Heart left ventricle (tissue), 16 donors: ENCODE measurements at regions of chr1 and their contacts with region 1.

Region 1: GRCh38 chr1:50704126-50704525 is 255.9 kb downstream of the FAF1 start:
- DNase-seq: no peak
- ATAC-seq: no peak
- H3K4me3 ChIP-seq: no peak overlapping the region
- H3K27ac ChIP-seq: no peak overlapping the region
- H3K4me1 ChIP-seq: peaks cover 0 to 16% (median 4%) of the 10 kb centered on the region in 12 donors
- H3K27me3 ChIP-seq: no peaks in the 10 kb centered on the region
- CTCF ChIP-seq: peak; percentile 49 to 78 (median 69)
- POLR2A ChIP-seq: no peak

Region 2: DNA sequence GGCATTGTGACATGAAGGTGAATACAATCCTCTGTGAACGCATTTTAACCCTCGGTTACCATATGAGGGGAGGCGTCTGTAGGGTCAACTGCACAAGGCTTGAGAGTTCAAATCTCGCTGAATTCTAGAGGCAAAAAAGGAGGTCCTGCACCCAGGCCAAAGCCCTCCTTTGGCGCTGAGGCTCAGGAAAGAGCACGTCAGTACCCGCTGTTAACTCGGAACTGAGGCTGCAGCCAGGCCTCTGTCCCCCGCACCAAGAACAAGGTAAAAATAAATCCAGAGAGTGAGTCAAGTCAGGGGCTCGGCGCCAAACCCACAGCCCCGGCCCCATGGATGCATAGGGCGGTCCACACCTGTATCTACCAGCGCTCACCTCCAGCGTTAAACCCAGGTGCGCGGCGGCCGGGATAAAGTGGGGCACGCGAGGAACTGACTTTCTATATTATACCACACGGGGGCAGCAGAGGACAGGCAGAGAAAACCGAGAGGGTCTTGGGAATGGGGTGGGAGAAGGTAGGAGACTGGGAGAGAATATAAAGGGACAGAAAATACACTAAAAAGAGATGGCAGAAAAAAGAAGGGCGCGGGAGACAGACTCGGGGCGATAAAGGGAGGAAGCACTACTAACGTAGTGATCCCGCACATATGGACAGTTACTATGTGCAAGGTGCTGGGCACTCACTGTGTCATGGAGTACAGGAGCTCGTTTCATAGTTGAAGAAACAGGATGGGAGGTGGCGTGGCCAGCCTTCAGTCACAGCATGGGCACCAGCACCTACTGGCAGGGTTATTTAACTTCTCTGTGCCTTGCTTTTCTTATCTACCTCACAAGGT is 335.7 kb before region 1 on chr1:
- intact Hi-C with region 1: loop called in 9 of 10 experiments (anchors 2 to 10 kb)
- DNase-seq: no peak
- ATAC-seq: peak in 3 of 4 donors; percentile 42 to 53 (median 52)
- H3K4me3 ChIP-seq: no peak overlapping the region
- H3K27ac ChIP-seq: no peak overlapping the region
- H3K4me1 ChIP-seq: peaks cover 0 to 5% (median 0%) of the 10 kb centered on the region in 12 donors
- H3K27me3 ChIP-seq: peaks cover 4 to 39% (median 10%) of the 10 kb centered on the region in 9 donors
- CTCF ChIP-seq: peak; percentile 54 to 82 (median 70)
- POLR2A ChIP-seq: no peak

Region 3: GRCh38 chr1:50829014-50829958 is 125.2 kb after region 1 on chr1:
- intact Hi-C with region 1: no loop called
- DNase-seq: no peak
- ATAC-seq: peak; percentile 76 to 88 (median 80)
- H3K4me3 ChIP-seq: no peak overlapping the region
- H3K27ac ChIP-seq: peak overlapping the region in 6 of 12 donors; percentile 5 to 39 (median 22)
- H3K4me1 ChIP-seq: peaks cover 0 to 41% (median 15%) of the 10 kb centered on the region in 12 donors
- H3K27me3 ChIP-seq: no peaks in the 10 kb centered on the region
- CTCF ChIP-seq: no peak
- POLR2A ChIP-seq: no peak

Region 4: GRCh38 chr1:51264451-51264850 is 560.3 kb after region 1 on chr1:
- intact Hi-C with region 1: no loop called
- DNase-seq: peak in 2 of 5 donors; percentile 21 to 47
- ATAC-seq: peak; percentile 66 to 82 (median 74)
- H3K4me3 ChIP-seq: peak overlapping the region in 1 of 12 donors; percentile 13
- H3K27ac ChIP-seq: peak overlapping the region in 9 of 12 donors; percentile 17 to 75 (median 48)
- H3K4me1 ChIP-seq: peaks cover 14 to 97% (median 75%) of the 10 kb centered on the region in 12 donors
- H3K27me3 ChIP-seq: no peaks in the 10 kb centered on the region
- CTCF ChIP-seq: no peak
- POLR2A ChIP-seq: no peak